ENCODE measurements at regions of chr20 and their contacts with region 1.

Region 1: GRCh38 chr20:61134296-61135030 is 117.6 kb upstream of the CDH4 start:
- DNase-seq: no peak
- ATAC-seq: no peak
- H3K4me3 ChIP-seq: no peak overlapping the region
- H3K27ac ChIP-seq: no peak overlapping the region
- H3K4me1 ChIP-seq: no peaks in the 10 kb centered on the region
- H3K27me3 ChIP-seq: peaks cover 3 to 46% of the 10 kb centered on the region in 2 experiments; a peak in 4 of 5 replicates
- CTCF ChIP-seq: no peak
- EP300 ChIP-seq: no peak
- POLR2A ChIP-seq: no peak
- RAD21 ChIP-seq: no peak

Region 2: GRCh38 chr20:60559462-60559861 is 575.0 kb before region 1 on chr20:
- CTCF ChIA-PET with region 1: no interaction called
- POLR2A ChIA-PET with region 1: no interaction called
- in situ Hi-C with region 1: no loop called
- intact Hi-C with region 1: loop called (anchors 5 kb)
- DNase-seq: no peak
- ATAC-seq: no peak
- H3K4me3 ChIP-seq: no peak overlapping the region
- H3K27ac ChIP-seq: no peak overlapping the region
- H3K4me1 ChIP-seq: no peaks in the 10 kb centered on the region
- H3K27me3 ChIP-seq: peaks cover 0 to 11% of the 10 kb centered on the region in 2 experiments; a peak in 1 of 5 replicates
- CTCF ChIP-seq: no peak
- EP300 ChIP-seq: no peak
- POLR2A ChIP-seq: no peak
- RAD21 ChIP-seq: no peak

Measured in HepG2 (cell line).